GM13977 (cell line): ENCODE measurements at regions of chr12 and their contacts with region 1.

Region 1: DNA sequence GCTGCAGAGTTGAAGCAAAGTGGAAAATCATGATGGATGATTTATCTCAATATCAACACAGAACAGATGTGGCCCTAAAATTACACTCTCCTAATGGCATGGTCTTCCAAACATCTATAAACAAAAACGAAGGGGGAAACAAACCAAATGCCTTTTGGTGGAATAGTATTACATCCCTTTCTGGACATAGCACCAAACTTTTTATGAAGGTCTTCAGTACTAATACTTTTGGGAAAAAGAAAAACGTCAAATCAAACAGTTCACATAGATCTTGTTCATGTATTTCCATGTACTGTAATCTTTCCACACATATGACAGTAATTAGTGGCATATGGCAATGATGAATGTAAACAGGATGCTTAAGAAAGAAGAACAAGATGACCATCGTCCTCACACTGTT is 22.9 kb upstream of the ANAPC7 start:
- DNase-seq: no peak
- CTCF ChIP-seq: no peak

Region 2: DNA sequence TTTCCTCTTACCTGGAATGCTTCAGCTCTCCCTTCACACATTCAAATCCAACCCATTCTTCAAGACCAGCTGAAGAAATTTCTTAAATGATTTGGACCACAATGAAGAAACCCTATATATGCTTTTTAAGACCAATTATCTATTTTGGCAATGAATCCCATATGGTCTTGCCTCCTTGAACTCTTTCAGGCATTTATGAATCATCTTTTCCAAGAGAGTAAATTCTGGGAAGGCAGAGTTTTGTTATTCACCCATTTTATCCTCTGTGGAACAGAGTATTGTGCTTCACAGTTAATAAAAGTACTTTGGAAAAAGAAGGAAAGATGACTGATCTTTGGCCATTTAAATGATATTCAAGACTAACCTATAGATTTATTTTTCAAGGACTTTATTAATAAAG is 444.2 kb before region 1 on chr12:
- in situ Hi-C with region 1: no loop called
- DNase-seq: no peak
- CTCF ChIP-seq: no peak

Region 3: DNA sequence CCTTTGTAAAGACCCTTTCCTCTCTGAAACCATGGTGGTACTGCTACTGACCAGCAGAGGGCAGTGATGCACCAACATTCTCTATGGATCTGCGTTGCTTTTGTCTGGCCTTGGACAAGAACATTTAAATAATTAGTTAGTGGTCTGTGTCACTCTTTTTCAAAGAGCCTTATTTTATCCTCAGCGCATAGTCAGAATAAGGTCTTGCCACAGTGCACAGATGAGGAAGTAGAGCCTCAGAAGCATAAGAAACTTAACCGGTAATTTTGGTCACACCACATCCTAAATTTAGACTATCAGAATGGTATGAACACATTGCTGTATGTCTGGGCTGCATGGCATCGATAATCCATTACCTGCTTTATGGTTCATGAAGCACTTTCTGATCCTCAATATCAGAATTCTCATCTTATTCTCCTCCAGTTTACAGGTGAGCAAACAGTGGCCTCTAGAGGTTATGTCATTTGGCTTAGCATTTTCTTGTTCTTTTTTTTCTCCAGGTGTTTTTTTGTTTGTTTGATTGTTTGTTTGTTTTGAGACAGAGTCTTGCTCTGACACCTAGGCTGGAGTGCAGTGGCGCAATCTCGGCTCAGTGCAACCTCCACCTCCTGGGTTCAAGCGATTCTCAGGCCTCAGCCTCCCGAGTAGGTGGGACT is 326.0 kb before region 1 on chr12:
- in situ Hi-C with region 1: loop called (anchors 10 kb)
- DNase-seq: peak; percentile 75
- CTCF ChIP-seq: peak; percentile 89